MCF 10A (cell line): ENCODE measurements at regions of chr22 and their contacts with region 1.

Region 1: DNA sequence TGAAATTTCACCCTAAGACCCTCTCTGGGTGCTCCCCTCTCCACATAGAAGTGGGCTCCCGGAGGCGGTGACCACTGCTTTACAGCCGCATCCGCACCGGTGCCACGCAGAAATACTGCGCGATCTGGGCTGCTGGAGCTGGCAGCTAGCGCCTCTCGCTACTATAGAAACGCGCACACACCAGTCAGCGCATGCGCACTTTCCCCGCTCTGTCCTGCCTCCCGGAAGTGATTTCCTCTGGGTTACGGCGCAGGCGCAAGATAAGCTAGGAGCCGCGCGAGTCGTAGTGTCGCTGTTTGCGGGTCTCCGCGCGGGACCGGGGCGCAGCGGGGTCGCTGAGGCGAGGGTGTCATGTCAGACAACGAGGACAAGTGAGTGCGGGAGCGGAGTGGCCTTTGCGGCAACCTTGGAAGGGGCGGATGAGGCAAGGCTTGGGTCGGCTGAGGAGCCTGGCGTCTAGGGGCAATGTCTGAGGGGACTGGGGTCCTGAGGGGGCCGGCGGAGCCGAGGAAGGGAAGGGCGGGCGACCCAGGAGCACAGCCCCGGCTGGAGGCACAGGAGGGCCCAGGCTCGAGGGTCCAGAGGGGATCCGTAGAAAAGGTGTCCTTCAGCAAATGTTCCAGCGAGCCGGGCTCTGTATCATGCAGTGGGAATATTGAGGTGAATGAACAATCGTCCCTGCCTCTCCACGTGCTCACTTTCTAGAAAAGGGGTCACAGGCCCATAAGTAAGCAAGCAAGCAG is at the starts of genes C22orf23 and POLR2F:
- DNase-seq: peak; percentile 96
- H3K4me3 Mint-ChIP-seq: peak within 1 kb of the TSS; percentile 76
- H3K27ac Mint-ChIP-seq: peak within 1 kb of the TSS; percentile 84
- H3K4me1 Mint-ChIP-seq: peaks cover 18% of the 10 kb centered on the region
- H3K27me3 Mint-ChIP-seq: no peaks in the 10 kb centered on the region
- CTCF ChIP-seq: no peak
- total RNA-seq, gene C22orf23: not detected in 2 replicates
- total RNA-seq, gene POLR2F: 87.5 and 97.6 TPM in 2 replicates

Region 2: GRCh38 chr22:37843741-37843990 is 109.9 kb before region 1 on chr22:
- CTCF ChIA-PET with region 1: no interaction called
- POLR2A ChIA-PET with region 1: interaction called, 17 read pairs
- intact Hi-C with region 1: no loop called
- DNase-seq: peak; percentile 17
- H3K4me3 Mint-ChIP-seq: peak overlapping the region; percentile 82
- H3K27ac Mint-ChIP-seq: no peak overlapping the region
- H3K4me1 Mint-ChIP-seq: peaks cover 5% of the 10 kb centered on the region
- H3K27me3 Mint-ChIP-seq: no peaks in the 10 kb centered on the region
- CTCF ChIP-seq: no peak

Region 3: GRCh38 chr22:37896181-37896592 is 57.4 kb before region 1 on chr22:
- CTCF ChIA-PET with region 1: interaction called, 4 read pairs
- POLR2A ChIA-PET with region 1: interaction called, 27 read pairs
- intact Hi-C with region 1: no loop called
- DNase-seq: peak; percentile 94
- H3K4me3 Mint-ChIP-seq: no peak overlapping the region
- H3K27ac Mint-ChIP-seq: peak overlapping the region; percentile 98
- H3K4me1 Mint-ChIP-seq: peaks cover 39% of the 10 kb centered on the region
- H3K27me3 Mint-ChIP-seq: no peaks in the 10 kb centered on the region
- CTCF ChIP-seq: no peak

Region 4: DNA sequence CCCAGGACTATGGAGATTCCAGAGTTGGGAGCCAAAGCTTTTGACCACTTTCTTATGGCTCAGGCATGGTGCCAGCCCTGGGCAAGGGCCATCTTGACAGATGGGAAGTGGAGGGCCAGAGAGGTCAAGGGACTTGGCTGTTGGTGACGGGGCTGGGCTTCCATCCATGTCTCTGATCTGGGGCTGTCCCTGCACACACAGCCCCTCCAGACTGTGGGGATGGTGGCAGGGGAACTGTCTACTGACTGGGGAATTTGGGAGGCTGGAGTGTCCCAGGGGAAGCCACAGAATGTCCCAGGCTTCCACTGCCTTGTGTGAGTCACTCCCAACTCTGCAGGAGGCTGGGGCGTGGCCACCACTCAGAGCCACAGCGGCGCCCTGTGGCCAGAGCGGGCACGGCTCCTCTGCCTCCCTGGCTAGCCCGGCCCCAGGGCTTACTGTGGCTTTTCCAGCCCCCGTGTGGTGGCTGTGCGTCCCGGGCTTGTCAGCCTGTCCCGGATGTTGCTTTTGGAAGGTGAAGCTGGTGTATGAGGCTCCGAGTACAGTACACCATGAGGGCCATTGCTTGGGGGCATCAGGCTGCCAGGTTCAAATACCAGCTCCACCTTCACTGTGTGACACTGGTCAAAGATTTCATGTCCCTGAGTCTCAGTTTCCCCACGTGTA is 19.8 kb before region 1 on chr22:
- CTCF ChIA-PET with region 1: interaction called, 10 read pairs
- POLR2A ChIA-PET with region 1: interaction called, 6 read pairs
- intact Hi-C with region 1: loop called (anchors 1 kb)
- DNase-seq: peak; percentile 95
- H3K4me3 Mint-ChIP-seq: peak overlapping the region; percentile 16
- H3K27ac Mint-ChIP-seq: no peak overlapping the region
- H3K4me1 Mint-ChIP-seq: peaks cover 17% of the 10 kb centered on the region
- H3K27me3 Mint-ChIP-seq: no peaks in the 10 kb centered on the region
- CTCF ChIP-seq: peak; percentile 90

Region 5: GRCh38 chr22:37943136-37943824 is 10.3 kb before region 1 on chr22:
- CTCF ChIA-PET with region 1: interaction called, 3 read pairs
- POLR2A ChIA-PET with region 1: interaction called, 13 read pairs
- intact Hi-C with region 1: no loop called
- DNase-seq: no peak
- H3K4me3 Mint-ChIP-seq: no peak overlapping the region
- H3K27ac Mint-ChIP-seq: no peak overlapping the region
- H3K4me1 Mint-ChIP-seq: no peaks in the 10 kb centered on the region
- H3K27me3 Mint-ChIP-seq: no peaks in the 10 kb centered on the region
- CTCF ChIP-seq: no peak